Activated CD4-positive, alpha-beta memory T cell treated with anti-CD3 and anti-CD28 coated beads for 36 hours (primary cell): ENCODE measurements at regions of chr2 and their contacts with region 1.

Region 1: GRCh38 chr2:162221064-162221463 is 22.2 kb downstream of the FAP start:
- DNase-seq: peak; percentile 74
- H3K4me3 Mint-ChIP-seq: no peak overlapping the region
- H3K27ac Mint-ChIP-seq: no peak overlapping the region
- H3K4me1 Mint-ChIP-seq: no peaks in the 10 kb centered on the region
- H3K27me3 Mint-ChIP-seq: peaks cover 6% of the 10 kb centered on the region

Region 2: DNA sequence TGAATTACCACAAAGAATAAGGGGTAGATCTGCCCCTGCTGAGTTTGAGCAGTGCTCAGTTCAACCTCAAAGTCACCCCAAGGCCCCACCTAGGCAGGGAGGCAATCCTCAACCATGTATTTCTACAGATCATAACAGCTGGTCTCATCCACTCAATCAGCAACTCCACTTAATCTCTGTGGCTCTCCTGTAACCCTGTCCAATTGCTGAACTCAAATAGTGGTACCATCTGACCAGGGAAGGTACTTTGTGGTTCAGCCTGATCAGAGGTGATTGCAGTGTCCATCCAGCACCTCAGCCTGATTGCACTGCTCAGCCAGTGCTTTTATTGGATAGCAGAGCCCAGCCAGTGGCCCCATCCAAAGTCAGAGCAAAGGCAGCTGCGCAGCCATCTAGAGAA is 687.8 kb before region 1 on chr2:
- CTCF ChIA-PET with region 1: no interaction called
- POLR2A ChIA-PET with region 1: no interaction called
- intact Hi-C with region 1: no loop called
- DNase-seq: no peak
- H3K4me3 Mint-ChIP-seq: no peak overlapping the region
- H3K27ac Mint-ChIP-seq: no peak overlapping the region
- H3K4me1 Mint-ChIP-seq: no peaks in the 10 kb centered on the region
- H3K27me3 Mint-ChIP-seq: peaks cover 10% of the 10 kb centered on the region

Region 3: GRCh38 chr2:162188451-162188850 is 32.6 kb before region 1 on chr2:
- CTCF ChIA-PET with region 1: interaction called, 23 read pairs
- POLR2A ChIA-PET with region 1: no interaction called
- intact Hi-C with region 1: no loop called
- DNase-seq: no peak
- H3K4me3 Mint-ChIP-seq: no peak overlapping the region
- H3K27ac Mint-ChIP-seq: no peak overlapping the region
- H3K4me1 Mint-ChIP-seq: no peaks in the 10 kb centered on the region
- H3K27me3 Mint-ChIP-seq: peaks cover 22% of the 10 kb centered on the region

Region 4: DNA sequence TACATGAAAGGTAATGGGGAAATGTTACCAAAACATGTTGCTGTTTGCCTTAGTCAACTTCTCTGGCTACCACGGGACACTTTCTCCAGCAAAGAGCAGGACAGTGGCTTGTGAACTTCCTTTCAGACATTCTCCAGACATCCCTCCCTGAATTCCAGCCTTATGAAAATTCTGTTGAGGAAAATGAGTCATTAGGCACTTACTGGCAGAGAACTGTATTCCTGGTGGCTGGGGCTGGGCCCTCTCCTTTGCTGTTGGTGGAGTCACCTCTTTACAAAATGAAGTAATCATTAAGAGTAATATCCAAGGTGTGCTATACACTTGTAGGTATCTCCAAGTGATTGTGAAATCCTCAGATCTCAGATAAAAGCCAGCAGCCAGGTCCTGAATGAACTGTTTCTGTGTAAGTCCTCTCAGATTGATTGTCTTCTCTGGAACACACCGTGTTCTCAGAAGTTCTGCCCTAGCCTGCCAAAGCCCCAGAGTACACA is 23.5 kb after region 1 on chr2:
- CTCF ChIA-PET with region 1: interaction called, 28 read pairs
- POLR2A ChIA-PET with region 1: no interaction called
- intact Hi-C with region 1: no loop called
- DNase-seq: no peak
- H3K4me3 Mint-ChIP-seq: no peak overlapping the region
- H3K27ac Mint-ChIP-seq: no peak overlapping the region
- H3K4me1 Mint-ChIP-seq: no peaks in the 10 kb centered on the region
- H3K27me3 Mint-ChIP-seq: peaks cover 14% of the 10 kb centered on the region

Region 5: DNA sequence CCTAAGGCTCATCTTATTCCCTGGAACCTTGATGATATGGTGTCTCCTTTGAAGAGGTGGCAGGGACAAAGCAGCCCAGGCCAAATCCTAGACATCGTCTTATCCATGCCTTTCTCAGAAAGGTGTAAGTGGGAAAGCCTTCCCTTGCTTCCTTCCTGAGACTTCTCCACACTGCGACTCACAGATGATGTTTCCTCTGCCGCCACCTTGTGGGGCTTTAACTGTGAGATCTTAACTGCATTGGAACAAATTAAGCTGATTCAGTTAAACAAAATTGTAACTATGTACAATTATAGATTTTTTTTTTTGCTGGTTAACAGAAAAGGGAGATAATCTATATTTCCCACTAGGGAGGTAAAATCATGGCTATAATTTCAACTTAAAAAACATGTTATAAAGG is 112.9 kb after region 1 on chr2:
- CTCF ChIA-PET with region 1: interaction called, 19 read pairs
- POLR2A ChIA-PET with region 1: no interaction called
- intact Hi-C with region 1: loop called (anchors 1 kb)
- DNase-seq: peak; percentile 38
- H3K4me3 Mint-ChIP-seq: no peak overlapping the region
- H3K27ac Mint-ChIP-seq: no peak overlapping the region
- H3K4me1 Mint-ChIP-seq: no peaks in the 10 kb centered on the region
- H3K27me3 Mint-ChIP-seq: no peaks in the 10 kb centered on the region